Panc1 (cell line): ENCODE measurements at regions of chr20 and their contacts with region 1.

Region 1: GRCh38 chr20:33744773-33745385 is 13.1 kb downstream of the ZNF341 start:
- DNase-seq: no peak
- ATAC-seq: no peak
- H3K4me3 ChIP-seq: no peak overlapping the region
- H3K27ac ChIP-seq: no peak overlapping the region
- H3K4me1 ChIP-seq: no peaks in the 10 kb centered on the region
- H3K27me3 ChIP-seq: no peaks in the 10 kb centered on the region
- CTCF ChIP-seq: no peak

Region 2: GRCh38 chr20:33671573-33672288 is 73.1 kb before region 1 on chr20:
- CTCF ChIA-PET with region 1: no interaction called
- POLR2A ChIA-PET with region 1: interaction called, 11 read pairs
- in situ Hi-C with region 1: no loop called
- intact Hi-C with region 1: no loop called
- DNase-seq: no peak
- ATAC-seq: no peak
- H3K4me3 ChIP-seq: no peak overlapping the region
- H3K27ac ChIP-seq: no peak overlapping the region
- H3K4me1 ChIP-seq: peaks cover 24% of the 10 kb centered on the region
- H3K27me3 ChIP-seq: no peaks in the 10 kb centered on the region
- CTCF ChIP-seq: no peak

Region 3: GRCh38 chr20:34232494-34233087 is 487.7 kb after region 1 on chr20:
- CTCF ChIA-PET with region 1: no interaction called
- POLR2A ChIA-PET with region 1: no interaction called
- in situ Hi-C with region 1: no loop called
- intact Hi-C with region 1: no loop called
- DNase-seq: no peak
- ATAC-seq: no peak
- H3K4me3 ChIP-seq: no peak overlapping the region
- H3K27ac ChIP-seq: no peak overlapping the region
- H3K4me1 ChIP-seq: no peaks in the 10 kb centered on the region
- H3K27me3 ChIP-seq: no peaks in the 10 kb centered on the region; the same call in 1 of the 2 replicates
- CTCF ChIP-seq: no peak